ENCODE measurements at regions of chr3 and their contacts with region 1.

Region 1: GRCh38 chr3:170811928-170812591 is 57.9 kb downstream of the RPL22L1 start:
- DNase-seq: peak; percentile 90
- H3K4me3 Mint-ChIP-seq: peak overlapping the region; percentile 55
- H3K27ac Mint-ChIP-seq: peak overlapping the region; percentile 82
- H3K4me1 Mint-ChIP-seq: peaks cover 37% of the 10 kb centered on the region
- H3K27me3 Mint-ChIP-seq: no peaks in the 10 kb centered on the region
- CTCF ChIP-seq: peak; percentile 89

Region 2: GRCh38 chr3:170307671-170308403 is 504.2 kb before region 1 on chr3:
- CTCF ChIA-PET with region 1: interaction called, 5 read pairs
- POLR2A ChIA-PET with region 1: no interaction called
- intact Hi-C with region 1: loop called (anchors 1 kb)
- DNase-seq: peak; percentile 32
- H3K4me3 Mint-ChIP-seq: no peak overlapping the region
- H3K27ac Mint-ChIP-seq: no peak overlapping the region
- H3K4me1 Mint-ChIP-seq: no peaks in the 10 kb centered on the region
- H3K27me3 Mint-ChIP-seq: no peaks in the 10 kb centered on the region
- CTCF ChIP-seq: no peak

Region 3: GRCh38 chr3:170463011-170463410 is 349.0 kb before region 1 on chr3:
- CTCF ChIA-PET with region 1: interaction called, 15 read pairs
- POLR2A ChIA-PET with region 1: interaction called, 3 read pairs
- intact Hi-C with region 1: no loop called
- DNase-seq: no peak
- H3K4me3 Mint-ChIP-seq: no peak overlapping the region
- H3K27ac Mint-ChIP-seq: no peak overlapping the region
- H3K4me1 Mint-ChIP-seq: no peaks in the 10 kb centered on the region
- H3K27me3 Mint-ChIP-seq: no peaks in the 10 kb centered on the region
- CTCF ChIP-seq: no peak

Region 4: GRCh38 chr3:170572665-170573253 is 239.3 kb before region 1 on chr3:
- CTCF ChIA-PET with region 1: interaction called, 10 read pairs
- POLR2A ChIA-PET with region 1: no interaction called
- intact Hi-C with region 1: no loop called
- DNase-seq: peak; percentile 78
- H3K4me3 Mint-ChIP-seq: no peak overlapping the region
- H3K27ac Mint-ChIP-seq: peak overlapping the region; percentile 54
- H3K4me1 Mint-ChIP-seq: peaks cover 13% of the 10 kb centered on the region
- H3K27me3 Mint-ChIP-seq: no peaks in the 10 kb centered on the region
- CTCF ChIP-seq: no peak

Region 5: GRCh38 chr3:170726976-170727661 is 84.9 kb before region 1 on chr3:
- CTCF ChIA-PET with region 1: interaction called, 32 read pairs
- POLR2A ChIA-PET with region 1: interaction called, 4 read pairs
- intact Hi-C with region 1: loop called (anchors 1 kb)
- DNase-seq: peak; percentile 75
- H3K4me3 Mint-ChIP-seq: no peak overlapping the region
- H3K27ac Mint-ChIP-seq: no peak overlapping the region
- H3K4me1 Mint-ChIP-seq: peaks cover 11% of the 10 kb centered on the region
- H3K27me3 Mint-ChIP-seq: no peaks in the 10 kb centered on the region
- CTCF ChIP-seq: no peak

Region 6: GRCh38 chr3:170840241-170840859 is 28.3 kb after region 1 on chr3:
- CTCF ChIA-PET with region 1: interaction called, 17 read pairs
- POLR2A ChIA-PET with region 1: interaction called, 3 read pairs
- intact Hi-C with region 1: no loop called
- DNase-seq: no peak
- H3K4me3 Mint-ChIP-seq: no peak overlapping the region
- H3K27ac Mint-ChIP-seq: no peak overlapping the region
- H3K4me1 Mint-ChIP-seq: peaks cover 4% of the 10 kb centered on the region
- H3K27me3 Mint-ChIP-seq: peaks cover 13% of the 10 kb centered on the region
- CTCF ChIP-seq: no peak

Measured in MCF 10A (cell line).